Sigmoid colon (tissue), 7 donors: ENCODE measurements at regions of chr1 and their contacts with region 1.

Region 1: DNA sequence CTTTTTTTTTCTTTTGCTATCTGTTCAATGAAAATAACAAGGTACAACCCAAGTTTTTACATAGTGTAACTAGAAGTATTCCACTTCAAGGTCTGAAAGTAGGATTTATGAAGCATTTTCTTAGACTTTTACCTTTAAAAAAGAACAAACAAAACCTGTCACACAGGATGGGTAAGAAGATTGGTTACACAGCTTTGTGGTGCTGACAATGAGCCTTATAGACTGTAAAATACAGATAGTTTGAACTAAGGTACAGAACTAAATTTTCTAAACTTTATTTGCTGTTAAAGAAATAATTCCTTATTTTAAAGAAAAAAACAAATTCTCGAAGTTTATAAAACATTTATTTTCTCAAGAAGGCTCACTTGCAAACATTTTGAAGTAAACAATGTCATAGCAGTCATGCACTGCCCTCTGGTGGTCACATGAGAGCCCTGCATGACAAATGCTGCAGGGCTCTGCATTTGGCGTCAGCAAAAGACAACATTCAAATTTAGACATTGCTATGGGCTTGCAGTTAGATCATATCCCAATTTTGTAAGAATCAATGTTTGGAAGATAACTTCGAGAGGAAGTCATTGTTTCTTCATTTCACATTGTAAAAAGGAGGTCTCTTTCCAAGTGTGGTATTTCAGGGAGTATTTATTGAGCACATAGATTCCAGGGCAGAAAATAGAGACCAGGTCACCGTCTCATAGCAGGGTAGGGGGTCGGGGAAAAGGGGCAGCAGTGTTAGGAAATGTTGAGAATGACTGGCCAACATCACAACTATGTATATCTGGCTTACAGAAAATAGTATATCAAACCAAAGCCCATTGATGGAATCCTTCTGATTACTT is 115.3 kb upstream of the FMN2 start:
- DNase-seq: no peak
- H3K4me3 ChIP-seq: no peak overlapping the region
- H3K27ac ChIP-seq: no peak overlapping the region
- H3K4me1 ChIP-seq: no peaks in the 10 kb centered on the region
- H3K27me3 ChIP-seq: no peaks in the 10 kb centered on the region
- CTCF ChIP-seq: peak; percentile 50 to 92 (median 70)
- EP300 ChIP-seq: no peak
- POLR2A ChIP-seq: no peak

Region 2: GRCh38 chr1:238252033-238252802 is 1724.1 kb before region 1 on chr1:
- intact Hi-C with region 1: loop called (anchors 5 kb)
- DNase-seq: no peak
- H3K4me3 ChIP-seq: no peak overlapping the region
- H3K27ac ChIP-seq: no peak overlapping the region
- H3K4me1 ChIP-seq: no peaks in the 10 kb centered on the region
- H3K27me3 ChIP-seq: no peaks in the 10 kb centered on the region
- CTCF ChIP-seq: peak in 1 of 4 experiments; percentile 37
- EP300 ChIP-seq: no peak
- POLR2A ChIP-seq: no peak

Region 3: DNA sequence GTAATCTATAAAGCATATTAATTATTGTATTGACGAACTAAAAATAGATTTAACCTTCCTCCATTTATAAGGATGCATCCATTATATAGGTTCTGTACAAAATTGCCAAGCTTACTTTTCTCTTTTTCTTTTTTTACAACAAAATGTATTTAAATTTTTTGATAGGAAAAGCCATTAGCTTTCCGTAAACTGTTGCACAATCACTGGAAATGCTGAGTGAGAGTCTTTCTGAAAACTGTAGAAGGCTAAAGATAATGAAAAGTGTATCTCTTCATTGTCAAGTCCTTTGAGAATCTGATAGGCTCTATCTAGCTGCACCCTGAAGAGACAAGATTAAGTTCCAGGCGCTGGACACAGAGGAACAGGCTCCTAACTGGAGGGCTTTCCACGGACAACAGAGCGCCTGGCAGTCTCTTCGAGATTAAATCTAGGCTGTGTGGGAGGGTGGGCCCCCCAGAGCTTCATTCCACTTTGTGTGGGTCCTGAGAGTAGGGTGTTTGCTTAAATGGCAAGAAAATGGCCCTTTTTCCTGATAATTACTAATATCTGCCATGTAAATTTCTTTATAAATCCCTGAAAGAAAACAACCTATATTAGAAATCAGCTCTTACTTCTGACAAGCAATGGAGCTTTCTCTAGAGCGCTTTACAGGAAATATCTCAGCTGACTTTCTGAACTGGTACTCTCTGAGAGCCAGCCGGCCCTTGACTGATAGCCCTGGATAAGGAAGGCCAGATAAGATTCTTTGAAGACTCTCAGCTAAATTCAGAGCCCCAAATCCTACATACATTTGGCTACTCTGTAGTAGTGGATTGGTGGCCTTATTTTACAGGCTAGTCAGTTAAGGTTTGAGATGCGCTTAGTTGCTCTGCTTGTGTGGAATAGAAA is 223.7 kb after region 1 on chr1:
- intact Hi-C with region 1: no loop called
- DNase-seq: no peak
- H3K4me3 ChIP-seq: no peak overlapping the region
- H3K27ac ChIP-seq: no peak overlapping the region
- H3K4me1 ChIP-seq: peaks cover 0 to 40% (median 6%) of the 10 kb centered on the region in 4 donors
- H3K27me3 ChIP-seq: no peaks in the 10 kb centered on the region
- CTCF ChIP-seq: no peak
- EP300 ChIP-seq: no peak
- POLR2A ChIP-seq: no peak